ENCODE measurements at regions of chr19 and their contacts with region 1.

Region 1: DNA sequence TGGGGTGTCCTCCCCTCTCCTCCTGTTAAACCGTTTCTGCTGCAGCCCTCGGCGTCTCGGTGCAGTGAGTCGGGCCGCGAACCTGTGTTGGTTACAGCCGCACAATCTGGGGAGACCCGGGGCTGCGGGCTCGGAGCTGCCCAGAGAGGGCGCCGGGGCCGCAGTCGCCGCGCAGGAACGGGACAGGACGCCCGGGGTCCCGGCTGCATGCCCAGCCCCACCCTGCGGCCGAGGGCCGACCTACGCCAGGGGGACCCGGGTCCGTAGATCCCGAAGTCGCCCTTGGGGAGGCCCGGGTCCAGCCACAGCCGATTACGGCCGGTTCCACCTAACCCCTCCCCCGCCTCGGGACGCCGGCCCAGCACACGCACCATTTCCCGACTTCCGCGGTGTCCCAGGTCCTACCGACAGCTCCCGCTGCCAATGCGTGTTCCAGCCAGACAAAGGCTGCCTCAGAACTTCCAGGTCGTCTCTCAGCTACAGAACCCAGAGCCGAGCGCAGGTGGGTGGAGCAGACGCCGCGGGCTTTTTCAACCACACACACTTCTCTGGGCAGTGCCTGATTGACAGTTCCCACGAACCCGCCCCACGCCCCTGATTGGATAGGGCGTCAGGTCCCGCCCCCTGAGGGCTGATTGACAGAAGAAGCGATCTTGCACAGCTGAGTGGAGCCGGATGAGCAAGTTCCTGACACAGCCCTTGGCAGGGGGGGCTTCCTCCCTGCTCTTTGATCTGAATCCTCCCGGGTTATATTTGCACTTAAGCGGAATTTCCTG is at the start of gene ZNF443:
- DNase-seq: peak; percentile 98
- ATAC-seq: peak; percentile 95
- H3K4me3 Mint-ChIP-seq: peak within 1 kb of the TSS; percentile 100
- H3K27ac Mint-ChIP-seq: peak within 1 kb of the TSS; percentile 89
- H3K4me1 Mint-ChIP-seq: peaks cover 27% of the 10 kb centered on the region
- H3K27me3 Mint-ChIP-seq: no peaks in the 10 kb centered on the region
- CTCF ChIP-seq: no peak
- total RNA-seq, gene ZNF443: 3.5 and 3.6 TPM in 2 replicates

Region 2: GRCh38 chr19:11848594-11849469 is 591.9 kb before region 1 on chr19 and contains the start of gene ZNF439:
- CTCF ChIA-PET with region 1: no interaction called
- POLR2A ChIA-PET with region 1: no interaction called
- intact Hi-C with region 1: loop called (anchors 1 kb)
- DNase-seq: peak; percentile 87
- ATAC-seq: peak; percentile 99
- H3K4me3 Mint-ChIP-seq: peak within 1 kb of the TSS; percentile 94
- H3K27ac Mint-ChIP-seq: peak within 1 kb of the TSS; percentile 92
- H3K4me1 Mint-ChIP-seq: peaks cover 36% of the 10 kb centered on the region
- H3K27me3 Mint-ChIP-seq: no peaks in the 10 kb centered on the region
- CTCF ChIP-seq: no peak
- total RNA-seq, gene ZNF439: 19.9 and 22.8 TPM in 2 replicates

Region 3: GRCh38 chr19:12365236-12366162 is 75.2 kb before region 1 on chr19 and contains the start of gene ZNF442:
- CTCF ChIA-PET with region 1: no interaction called
- POLR2A ChIA-PET with region 1: interaction called, 6 read pairs
- intact Hi-C with region 1: loop called (anchors 2 kb)
- DNase-seq: peak; percentile 68
- ATAC-seq: peak; percentile 97
- H3K4me3 Mint-ChIP-seq: peak within 1 kb of the TSS; percentile 96
- H3K27ac Mint-ChIP-seq: peak within 1 kb of the TSS; percentile 91
- H3K4me1 Mint-ChIP-seq: peaks cover 25% of the 10 kb centered on the region
- H3K27me3 Mint-ChIP-seq: no peaks in the 10 kb centered on the region
- CTCF ChIP-seq: no peak
- total RNA-seq, gene ZNF442: 6.9 and 8.7 TPM in 2 replicates

Region 4: DNA sequence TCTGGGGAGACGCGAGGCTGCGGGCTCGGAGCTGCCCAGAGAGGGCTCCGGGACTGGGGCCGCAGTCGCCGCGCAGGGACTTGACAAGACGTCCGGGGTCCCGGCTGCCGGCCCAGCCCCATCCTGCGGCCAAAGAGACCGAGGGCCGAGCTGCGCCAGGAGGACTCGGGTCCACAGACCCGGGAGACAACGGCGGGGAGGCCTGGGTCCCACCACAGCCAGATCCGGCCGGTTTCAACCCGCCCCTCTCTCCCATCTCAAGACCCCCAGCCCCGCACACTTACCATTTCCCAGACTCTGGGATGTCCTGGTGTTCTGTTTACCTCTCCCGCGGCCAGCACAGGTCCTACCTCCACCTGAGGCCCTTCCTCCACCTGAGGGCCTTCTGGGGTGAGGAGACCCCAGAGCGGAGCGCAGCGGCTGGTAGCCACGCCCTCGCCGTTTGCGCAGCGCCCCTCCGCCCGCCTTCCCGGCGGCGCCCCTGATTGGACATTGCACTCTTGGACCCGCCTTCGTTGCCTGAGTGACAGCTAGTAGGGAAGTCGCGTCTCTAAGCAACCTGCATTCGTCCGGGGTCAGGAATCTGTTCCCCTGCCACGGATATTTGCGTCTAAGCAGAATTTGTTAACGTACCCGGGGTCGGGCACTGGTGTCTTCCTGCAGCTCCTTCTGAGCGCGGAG is 43.8 kb after region 1 on chr19 and contains the start of gene ZNF709:
- CTCF ChIA-PET with region 1: no interaction called
- POLR2A ChIA-PET with region 1: interaction called, 14 read pairs
- intact Hi-C with region 1: loop called (anchors 2 kb)
- DNase-seq: peak; percentile 90
- ATAC-seq: peak; percentile 98
- H3K4me3 Mint-ChIP-seq: peak within 1 kb of the TSS; percentile 96
- H3K27ac Mint-ChIP-seq: peak within 1 kb of the TSS; percentile 88
- H3K4me1 Mint-ChIP-seq: peaks cover 35% of the 10 kb centered on the region
- H3K27me3 Mint-ChIP-seq: no peaks in the 10 kb centered on the region
- CTCF ChIP-seq: no peak
- total RNA-seq, gene ZNF709: 4.8 and 6.4 TPM in 2 replicates

Region 5: GRCh38 chr19:12580163-12580694 is 139.5 kb after region 1 on chr19:
- CTCF ChIA-PET with region 1: no interaction called
- POLR2A ChIA-PET with region 1: interaction called, 10 read pairs
- intact Hi-C with region 1: no loop called
- DNase-seq: no peak
- ATAC-seq: no peak
- H3K4me3 Mint-ChIP-seq: no peak overlapping the region
- H3K27ac Mint-ChIP-seq: no peak overlapping the region
- H3K4me1 Mint-ChIP-seq: peaks cover 10% of the 10 kb centered on the region
- H3K27me3 Mint-ChIP-seq: no peaks in the 10 kb centered on the region
- CTCF ChIP-seq: no peak

Region 6: DNA sequence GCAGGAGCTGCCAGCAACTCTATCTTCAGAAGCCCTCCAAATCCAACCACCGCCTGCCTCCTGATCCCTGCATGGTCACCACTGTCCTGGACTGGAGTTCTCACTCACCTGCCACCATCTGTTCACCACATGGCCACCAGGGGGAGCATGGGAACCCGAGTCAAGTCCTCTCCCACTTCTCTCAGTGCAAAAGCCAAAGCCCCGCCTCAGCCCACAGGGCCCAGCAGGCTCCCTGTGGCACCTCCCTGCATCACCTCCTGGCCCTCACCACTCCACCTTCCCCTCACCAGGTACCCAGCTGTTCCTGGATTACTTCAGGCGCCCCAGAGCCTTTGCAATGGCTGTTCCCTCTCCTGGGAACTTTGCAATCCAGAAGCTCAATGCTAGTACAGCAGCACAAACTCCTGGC is 235.7 kb after region 1 on chr19:
- CTCF ChIA-PET with region 1: no interaction called
- POLR2A ChIA-PET with region 1: no interaction called
- intact Hi-C with region 1: no loop called
- DNase-seq: peak; percentile 77
- ATAC-seq: peak; percentile 45
- H3K4me3 Mint-ChIP-seq: no peak overlapping the region
- H3K27ac Mint-ChIP-seq: peak overlapping the region; percentile 50
- H3K4me1 Mint-ChIP-seq: peaks cover 32% of the 10 kb centered on the region
- H3K27me3 Mint-ChIP-seq: no peaks in the 10 kb centered on the region
- CTCF ChIP-seq: no peak

Measured in activated B cell treated with CpG ODN at 0.5 μM for 24 hours (primary cell).